ENCODE measurements at regions of chr10 and their contacts with region 1.

Region 1: GRCh38 chr10:69506834-69507721 is 55.8 kb downstream of the TSPAN15 start:
- DNase-seq: peak in 2 of 10 donors; percentile 26 to 56
- H3K4me3 ChIP-seq: peak overlapping the region in 31 of 59 donors; percentile 8 to 60 (median 46)
- H3K27ac ChIP-seq: peak overlapping the region in 58 of 59 donors; percentile 10 to 94 (median 81)
- H3K27me3 ChIP-seq: no peaks in the 10 kb centered on the region
- CTCF ChIP-seq: no peak

Region 2: GRCh38 chr10:68997211-68997610 is 509.9 kb before region 1 on chr10:
- intact Hi-C with region 1: no loop called
- DNase-seq: no peak
- H3K4me3 ChIP-seq: no peak overlapping the region
- H3K27ac ChIP-seq: no peak overlapping the region
- H3K27me3 ChIP-seq: no peaks in the 10 kb centered on the region
- CTCF ChIP-seq: no peak

Region 3: GRCh38 chr10:69248117-69248730 is 258.9 kb before region 1 on chr10:
- intact Hi-C with region 1: loop called in 1 of 2 experiments (anchors 5 kb)
- DNase-seq: no peak
- H3K4me3 ChIP-seq: no peak overlapping the region
- H3K27ac ChIP-seq: no peak overlapping the region
- H3K27me3 ChIP-seq: peaks cover 0 to 60% (median 0%) of the 10 kb centered on the region in 45 donors
- CTCF ChIP-seq: no peak

Region 4: GRCh38 chr10:69408318-69409175 is 98.5 kb before region 1 on chr10:
- intact Hi-C with region 1: loop called (anchors 5 kb)
- DNase-seq: peak; percentile 79 to 96 (median 89)
- H3K4me3 ChIP-seq: peak overlapping the region; percentile 39 to 73 (median 59)
- H3K27ac ChIP-seq: peak overlapping the region in 58 of 59 donors; percentile 55 to 97 (median 84)
- H3K27me3 ChIP-seq: no peaks in the 10 kb centered on the region
- CTCF ChIP-seq: peak; percentile 29 to 93 (median 80)

Region 5: DNA sequence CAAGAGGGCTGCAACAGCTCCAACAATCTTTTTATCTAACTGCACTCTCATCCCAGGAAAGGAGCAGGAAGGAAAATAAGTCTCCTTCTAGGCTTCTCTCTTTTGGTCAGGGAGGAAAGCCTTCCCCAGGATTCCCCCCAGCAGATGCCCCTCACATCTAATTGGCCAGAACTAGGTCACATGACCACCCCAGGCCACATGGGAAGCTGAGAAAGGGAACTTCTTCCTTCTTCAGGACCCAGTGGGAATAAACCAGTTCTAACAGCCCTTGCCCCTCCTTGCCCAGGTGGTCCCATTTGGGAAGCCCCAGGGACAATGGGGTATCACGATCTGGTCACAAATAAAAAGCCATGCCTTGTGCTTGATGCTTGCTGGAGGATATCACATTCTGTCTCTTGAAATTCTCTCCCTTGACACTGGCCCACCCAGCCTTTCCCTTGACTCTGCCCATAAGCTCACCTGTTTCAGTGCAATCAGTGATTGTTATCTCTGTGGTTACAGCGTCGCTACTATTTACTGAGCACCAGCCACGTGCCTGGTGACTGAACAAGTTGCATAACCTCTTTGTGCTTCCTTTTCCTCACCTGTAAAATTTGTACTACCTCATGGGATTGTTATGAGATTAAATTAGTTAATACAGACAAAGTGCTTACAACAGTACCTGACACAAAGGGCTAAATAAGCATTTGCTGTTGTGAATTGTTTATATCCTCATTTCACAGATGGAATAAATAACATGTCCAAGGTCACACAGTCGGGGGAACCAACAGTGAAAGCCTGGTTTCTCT is 81.4 kb before region 1 on chr10:
- intact Hi-C with region 1: loop called (anchors 1 to 2 kb)
- DNase-seq: no peak
- H3K4me3 ChIP-seq: no peak overlapping the region
- H3K27ac ChIP-seq: no peak overlapping the region
- H3K27me3 ChIP-seq: no peaks in the 10 kb centered on the region
- CTCF ChIP-seq: no peak

Region 6: DNA sequence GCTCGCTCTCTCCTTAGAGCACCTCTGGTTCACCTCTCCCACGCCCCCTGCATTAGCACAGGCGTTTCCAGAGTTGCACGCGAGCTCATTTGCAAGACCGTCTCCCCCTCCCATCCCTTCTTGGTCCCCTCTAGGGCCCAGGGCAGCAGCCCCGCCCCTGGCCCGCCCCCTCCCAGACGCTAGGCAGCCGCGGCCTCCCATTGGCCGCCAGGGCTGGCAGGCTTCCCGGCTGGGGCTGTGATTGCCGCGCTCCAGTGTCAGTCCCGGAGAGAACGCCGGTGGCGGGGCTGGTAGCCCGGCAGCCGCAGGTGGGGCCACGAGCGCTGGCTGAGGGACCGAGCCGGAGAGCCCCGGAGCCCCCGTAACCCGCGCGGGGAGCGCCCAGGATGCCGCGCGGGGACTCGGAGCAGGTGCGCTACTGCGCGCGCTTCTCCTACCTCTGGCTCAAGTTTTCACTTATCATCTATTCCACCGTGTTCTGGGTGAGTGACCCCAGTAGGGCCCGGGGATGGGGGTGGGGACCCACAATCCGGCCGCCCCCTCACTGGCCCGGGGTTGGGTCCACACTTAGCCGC is 55.8 kb before region 1 on chr10 and contains the start of gene TSPAN15:
- intact Hi-C with region 1: loop called (anchors 2 kb)
- DNase-seq: peak; percentile 91 to 97 (median 94)
- H3K4me3 ChIP-seq: peak within 1 kb of the TSS; percentile 69 to 100 (median 92)
- H3K27ac ChIP-seq: peak within 1 kb of the TSS in 58 of 59 donors; percentile 29 to 97 (median 82)
- H3K27me3 ChIP-seq: no peaks in the 10 kb centered on the region
- CTCF ChIP-seq: peak in 38 of 56 donors; percentile 10 to 59 (median 34)
- total RNA-seq, gene TSPAN15: 8.7 to 188 (median 44.2) TPM

Region 7: DNA sequence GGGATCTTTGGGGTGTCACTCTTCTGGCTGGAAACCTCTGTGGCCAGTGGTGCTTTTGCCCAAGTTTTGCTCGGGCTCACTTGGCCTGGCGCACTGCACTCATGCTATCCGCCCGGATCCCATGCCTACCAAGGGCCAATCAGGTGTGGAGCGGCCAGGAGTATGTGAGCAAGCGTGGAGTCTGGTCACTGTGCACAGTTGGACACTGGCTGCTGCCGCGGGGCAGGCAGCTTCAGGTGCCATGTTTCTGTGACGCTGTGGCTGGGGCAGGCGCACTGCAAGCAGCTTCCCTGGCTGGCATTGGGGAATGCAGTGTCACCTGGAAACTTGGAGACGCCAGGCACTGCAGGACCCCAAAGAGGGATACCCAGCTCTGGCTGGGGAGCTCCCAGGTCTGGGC is 20.9 kb after region 1 on chr10:
- intact Hi-C with region 1: no loop called
- DNase-seq: no peak
- H3K4me3 ChIP-seq: no peak overlapping the region
- H3K27ac ChIP-seq: no peak overlapping the region
- H3K27me3 ChIP-seq: no peaks in the 10 kb centered on the region
- CTCF ChIP-seq: no peak

Measured in dorsolateral prefrontal cortex (tissue), 120 donors.